Mammary epithelial cell (primary cell): ENCODE measurements at regions of chr12 and their contacts with region 1.

Region 1: DNA sequence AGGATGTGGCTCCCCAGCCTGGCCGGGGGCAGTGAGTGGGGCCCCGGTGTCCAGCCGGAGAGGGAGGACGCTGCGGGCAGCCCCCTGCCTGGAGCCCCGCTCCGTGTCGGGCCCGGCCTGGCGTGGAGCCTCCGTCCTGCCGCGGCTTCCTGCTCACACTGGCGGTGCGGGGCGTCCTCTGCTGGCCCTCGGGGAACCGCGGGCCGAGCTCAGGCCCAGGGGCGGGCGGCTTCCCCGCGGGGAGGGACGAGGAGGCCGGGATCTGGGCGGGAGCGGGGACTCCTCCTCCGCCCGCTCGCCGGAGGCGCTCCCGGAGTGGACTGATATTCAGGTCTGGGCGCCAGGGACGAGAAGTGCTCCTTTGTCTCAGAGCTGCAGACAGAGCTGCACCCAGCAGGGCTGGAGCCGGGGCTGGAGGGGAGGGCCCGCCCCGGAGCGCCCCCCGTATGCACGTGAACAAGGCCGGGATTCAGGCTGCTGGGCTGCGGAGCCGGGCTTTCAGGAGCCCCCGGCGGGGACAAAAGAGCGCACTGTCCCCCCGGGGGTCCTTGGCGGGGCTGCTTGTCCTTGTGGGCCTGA is 2.2 kb downstream of the MMP17 start:
- DNase-seq: peak; percentile 71
- H3K4me3 ChIP-seq: peak overlapping the region; percentile 51 to 67 (median 61)
- H3K27ac ChIP-seq: no peak overlapping the region
- H3K4me1 ChIP-seq: peaks cover 44% of the 10 kb centered on the region
- H3K27me3 ChIP-seq: no peaks in the 10 kb centered on the region
- CTCF ChIP-seq: peak; percentile 43 to 68

Region 2: GRCh38 chr12:130818635-130819576 is 1011.5 kb before region 1 on chr12:
- CTCF ChIA-PET with region 1: no interaction called
- dilution Hi-C with region 1: no loop called
- in situ Hi-C with region 1: no loop called
- intact Hi-C with region 1: loop called (anchors 1 kb)
- DNase-seq: peak; percentile 28
- H3K4me3 ChIP-seq: peak overlapping the region; percentile 32 to 49 (median 40)
- H3K27ac ChIP-seq: no peak overlapping the region
- H3K4me1 ChIP-seq: peaks cover 6% of the 10 kb centered on the region
- H3K27me3 ChIP-seq: no peaks in the 10 kb centered on the region
- CTCF ChIP-seq: peak; percentile 55 to 70

Region 3: GRCh38 chr12:130916251-130916911 is 914.0 kb before region 1 on chr12:
- CTCF ChIA-PET with region 1: no interaction called
- dilution Hi-C with region 1: no loop called
- in situ Hi-C with region 1: no loop called
- intact Hi-C with region 1: loop called (anchors 1 kb)
- DNase-seq: peak; percentile 21
- H3K4me3 ChIP-seq: no peak overlapping the region
- H3K27ac ChIP-seq: no peak overlapping the region
- H3K4me1 ChIP-seq: no peaks in the 10 kb centered on the region
- H3K27me3 ChIP-seq: no peaks in the 10 kb centered on the region
- CTCF ChIP-seq: peak; percentile 59 to 87

Region 4: GRCh38 chr12:131559517-131560516 is 270.6 kb before region 1 on chr12:
- CTCF ChIA-PET with region 1: no interaction called
- dilution Hi-C with region 1: no loop called
- in situ Hi-C with region 1: no loop called
- intact Hi-C with region 1: no loop called
- DNase-seq: no peak
- H3K4me3 ChIP-seq: no peak overlapping the region
- H3K27ac ChIP-seq: no peak overlapping the region
- H3K4me1 ChIP-seq: no peaks in the 10 kb centered on the region
- H3K27me3 ChIP-seq: no peaks in the 10 kb centered on the region
- CTCF ChIP-seq: no peak

Region 5: GRCh38 chr12:131710464-131711457 is 119.7 kb before region 1 on chr12 and contains the start of gene SFSWAP:
- CTCF ChIA-PET with region 1: no interaction called
- dilution Hi-C with region 1: no loop called
- in situ Hi-C with region 1: no loop called
- intact Hi-C with region 1: loop called (anchors 5 kb)
- DNase-seq: peak; percentile 80
- H3K4me3 ChIP-seq: peak within 1 kb of the TSS; percentile 61 to 97 (median 81)
- H3K27ac ChIP-seq: peak within 1 kb of the TSS; percentile 98
- H3K4me1 ChIP-seq: peaks cover 15% of the 10 kb centered on the region
- H3K27me3 ChIP-seq: no peaks in the 10 kb centered on the region
- CTCF ChIP-seq: no peak
- total RNA-seq, gene SFSWAP: 19.8 to 41.6 TPM

Region 6: DNA sequence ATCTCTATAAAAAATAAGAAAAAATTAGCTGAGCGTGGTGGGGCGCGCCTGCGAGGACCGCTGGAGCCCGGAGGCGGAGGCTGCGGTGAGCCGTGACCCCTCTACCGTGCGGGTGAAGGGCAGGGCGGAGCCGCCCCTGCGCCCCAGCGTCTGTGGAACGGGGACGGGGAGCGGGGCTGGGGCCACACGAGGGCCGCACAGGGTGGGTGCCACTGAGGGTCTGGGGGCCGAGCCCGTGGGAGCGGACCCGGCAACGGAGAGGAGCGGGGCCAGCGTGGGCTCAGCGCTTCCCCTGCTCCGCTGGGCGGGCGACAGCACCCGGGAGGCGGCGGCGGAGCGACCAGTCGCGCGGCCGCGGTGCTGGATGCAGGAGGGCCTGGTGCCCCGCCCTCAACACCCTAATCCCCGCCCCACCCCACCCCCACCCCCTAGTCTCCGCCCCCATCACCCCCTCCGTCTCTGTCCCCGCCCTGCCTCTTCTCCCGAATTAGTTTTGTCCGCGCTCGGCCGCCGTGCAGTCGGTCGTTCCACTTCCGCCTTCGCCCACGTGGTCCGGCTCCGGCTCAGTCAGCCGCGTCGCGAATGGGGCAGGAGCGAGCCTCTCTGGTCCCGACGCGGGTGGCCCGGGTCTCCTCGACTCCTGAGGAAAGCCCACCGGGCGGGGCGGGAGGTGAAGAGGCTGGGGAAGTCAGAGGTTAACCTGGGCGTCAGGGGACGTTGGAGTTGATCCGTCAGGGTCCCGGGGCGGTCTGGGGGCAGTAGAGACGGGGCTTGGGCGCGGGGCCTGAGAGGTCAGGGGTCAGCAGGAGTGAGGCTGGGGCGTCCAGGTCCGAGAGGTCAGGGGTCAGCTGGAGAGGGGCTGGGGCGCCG is 98.5 kb after region 1 on chr12 and contains the start of gene PUS1:
- CTCF ChIA-PET with region 1: no interaction called
- dilution Hi-C with region 1: no loop called
- in situ Hi-C with region 1: no loop called
- intact Hi-C with region 1: loop called (anchors 2 kb)
- DNase-seq: peak; percentile 91
- H3K4me3 ChIP-seq: peak within 1 kb of the TSS; percentile 98 to 99 (median 99)
- H3K27ac ChIP-seq: peak within 1 kb of the TSS; percentile 35
- H3K4me1 ChIP-seq: peaks cover 12% of the 10 kb centered on the region
- H3K27me3 ChIP-seq: no peaks in the 10 kb centered on the region
- CTCF ChIP-seq: no peak
- total RNA-seq, gene PUS1: 7.3 to 51.3 TPM

Region 7: GRCh38 chr12:132771126-132771838 is 940.9 kb after region 1 on chr12:
- CTCF ChIA-PET with region 1: no interaction called
- dilution Hi-C with region 1: no loop called
- in situ Hi-C with region 1: no loop called
- intact Hi-C with region 1: no loop called
- DNase-seq: no peak
- H3K4me3 ChIP-seq: no peak overlapping the region
- H3K27ac ChIP-seq: no peak overlapping the region
- H3K4me1 ChIP-seq: no peaks in the 10 kb centered on the region
- H3K27me3 ChIP-seq: no peaks in the 10 kb centered on the region
- CTCF ChIP-seq: no peak